Transverse colon (tissue), 4 donors: ENCODE measurements at regions of chr14 and their contacts with region 1.

Region 1: GRCh38 chr14:50321009-50321660 is 9.0 kb downstream of the DMAC2L start:
- DNase-seq: peak; percentile 75
- H3K4me3 ChIP-seq: peak overlapping the region in 1 of 4 donors; percentile 23
- H3K27ac ChIP-seq: peak overlapping the region; percentile 74 to 81 (median 78)
- H3K4me1 ChIP-seq: peaks cover 7 to 21% (median 12%) of the 10 kb centered on the region in 4 donors
- H3K27me3 ChIP-seq: no peaks in the 10 kb centered on the region
- CTCF ChIP-seq: peak; percentile 82 to 84 (median 83)
- EP300 ChIP-seq: no peak
- POLR2A ChIP-seq: no peak

Region 2: DNA sequence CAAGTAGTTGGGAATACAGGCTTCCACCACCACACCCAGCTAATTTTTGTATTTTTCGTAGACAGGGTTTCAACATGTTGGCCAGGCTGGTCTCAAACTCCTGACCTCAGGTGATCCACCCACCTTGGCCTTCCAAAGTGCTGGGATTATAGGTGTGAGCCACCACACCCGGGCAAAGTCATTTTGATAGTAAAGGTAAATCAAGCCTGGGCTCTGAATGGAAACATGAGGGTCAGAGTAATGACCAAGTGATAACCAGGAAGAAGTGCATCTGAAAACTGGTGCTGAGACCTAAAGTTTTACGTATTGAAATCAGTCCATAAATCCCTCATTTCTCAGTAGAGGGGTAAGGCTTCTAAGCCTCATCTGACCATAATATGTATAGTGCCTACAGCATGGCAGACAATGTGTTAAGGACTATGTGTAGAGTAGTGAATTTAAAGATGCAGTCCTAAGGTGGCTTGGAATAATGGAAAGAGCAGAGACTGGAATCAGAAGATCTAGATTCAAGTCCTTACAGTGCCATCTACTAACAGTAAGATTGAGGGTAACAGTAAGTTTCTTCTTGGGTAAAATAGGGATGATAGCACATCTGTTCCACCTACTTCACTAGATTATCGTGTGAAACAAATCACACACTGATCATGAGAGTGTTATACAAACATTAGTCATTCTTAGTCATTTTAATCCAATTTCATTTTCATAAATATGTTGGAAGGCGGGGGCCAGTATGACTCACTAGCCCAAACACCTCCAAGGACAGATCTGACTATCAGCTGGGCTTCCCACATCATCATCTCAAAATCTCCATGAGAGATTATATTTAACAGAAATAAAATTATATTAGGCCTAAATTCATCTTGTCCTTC is 200.0 kb after region 1 on chr14:
- in situ Hi-C with region 1: loop called in 2 of 4 experiments (anchors 5 to 10 kb)
- intact Hi-C with region 1: no loop called
- DNase-seq: peak; percentile 19
- H3K4me3 ChIP-seq: no peak overlapping the region
- H3K27ac ChIP-seq: peak overlapping the region in 3 of 4 donors; percentile 38 to 63 (median 48)
- H3K4me1 ChIP-seq: peaks cover 19 to 47% (median 30%) of the 10 kb centered on the region in 4 donors
- H3K27me3 ChIP-seq: no peaks in the 10 kb centered on the region
- CTCF ChIP-seq: no peak
- EP300 ChIP-seq: no peak
- POLR2A ChIP-seq: no peak

Region 3: DNA sequence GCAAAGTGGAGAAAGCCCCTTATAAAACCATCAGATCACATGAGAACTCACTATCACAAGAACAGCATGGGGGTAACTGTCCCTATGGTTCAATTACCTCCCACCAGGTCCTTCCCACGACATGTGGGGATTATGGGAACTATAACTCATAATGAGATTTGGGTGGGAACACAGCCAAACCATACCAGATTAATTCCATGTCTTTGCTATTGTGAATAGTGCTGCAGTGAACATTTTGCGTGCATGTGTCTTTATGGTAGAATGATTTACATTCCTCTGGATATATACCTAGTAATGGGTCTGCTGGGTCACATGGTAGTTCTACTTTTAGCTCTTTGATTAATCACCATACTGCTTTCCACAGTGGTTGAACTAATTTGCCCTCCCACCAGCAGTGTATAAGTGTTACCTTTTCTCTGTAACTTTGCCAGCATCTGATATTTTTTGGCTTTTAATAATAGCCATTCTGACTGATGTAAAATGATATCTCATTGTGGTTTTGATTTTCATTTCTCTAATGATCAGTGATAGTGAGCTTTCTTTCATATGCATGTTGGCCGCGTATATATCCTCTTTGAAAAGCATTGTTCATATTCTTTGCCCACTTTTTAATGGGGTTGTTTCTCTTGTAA is 376.6 kb after region 1 on chr14:
- in situ Hi-C with region 1: no loop called
- intact Hi-C with region 1: no loop called
- DNase-seq: no peak
- H3K4me3 ChIP-seq: no peak overlapping the region
- H3K27ac ChIP-seq: no peak overlapping the region
- H3K4me1 ChIP-seq: no peaks in the 10 kb centered on the region
- H3K27me3 ChIP-seq: no peaks in the 10 kb centered on the region
- CTCF ChIP-seq: no peak
- EP300 ChIP-seq: no peak
- POLR2A ChIP-seq: no peak